ENCODE measurements at regions of chr12 and their contacts with region 1.

Region 1: DNA sequence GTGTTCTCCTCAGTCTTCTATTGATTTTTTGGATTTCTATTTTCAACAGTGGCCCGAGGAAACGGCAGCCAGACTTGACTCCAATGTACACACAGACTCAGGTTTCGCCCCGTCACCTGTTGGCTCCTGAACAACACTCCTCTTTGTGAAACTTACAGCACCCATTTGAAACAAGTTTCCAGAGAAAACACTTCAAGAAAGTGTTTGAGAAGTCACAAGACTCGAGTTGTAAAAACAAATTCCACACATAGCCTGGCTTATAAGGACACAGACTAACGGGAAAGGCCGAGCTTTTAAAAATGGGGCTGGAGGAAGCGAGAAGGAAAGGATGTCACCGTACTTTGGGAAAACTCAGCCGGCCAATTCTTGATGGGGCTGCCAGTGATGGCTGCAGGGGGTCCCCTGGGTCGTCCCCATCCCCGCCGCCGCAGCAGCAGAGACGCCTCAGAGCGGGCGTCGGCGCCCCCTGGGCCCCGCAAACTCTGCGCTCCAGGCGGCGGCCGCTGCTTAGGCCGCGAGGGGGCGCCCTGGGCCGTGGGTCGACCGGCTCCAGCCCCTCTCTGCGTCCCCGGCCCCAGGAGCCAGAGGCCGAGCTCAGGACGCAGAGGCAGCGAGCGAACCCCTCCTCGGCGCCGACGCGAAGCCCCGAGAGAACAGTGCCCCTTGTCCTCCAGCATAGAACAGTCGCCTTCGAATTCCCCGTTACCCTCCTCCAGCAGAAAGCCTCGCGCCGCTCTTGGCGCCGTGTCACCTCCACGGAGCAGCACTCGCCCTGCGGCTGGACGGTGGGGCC is 106.9 kb downstream of the PRICKLE1 start:
- DNase-seq: peak; percentile 28 to 74 (median 67)
- H3K4me3 ChIP-seq: peak overlapping the region in 2 of 4 donors; percentile 47 to 72
- H3K27ac ChIP-seq: peak overlapping the region in 4 of 5 donors; percentile 33 to 89 (median 70)
- H3K4me1 ChIP-seq: peaks cover 8 to 16% of the 10 kb centered on the region in 2 donors
- H3K27me3 ChIP-seq: no peaks in the 10 kb centered on the region
- CTCF ChIP-seq: peak; percentile 51 to 87 (median 74)
- POLR2A ChIP-seq: no peak

Region 2: GRCh38 chr12:42568952-42569915 is 86.6 kb after region 1 on chr12:
- intact Hi-C with region 1: loop called in 1 of 2 experiments (anchors 5 kb)
- DNase-seq: no peak
- H3K4me3 ChIP-seq: no peak overlapping the region
- H3K27ac ChIP-seq: no peak overlapping the region
- H3K4me1 ChIP-seq: peaks cover 0 to 4% of the 10 kb centered on the region in 2 donors
- H3K27me3 ChIP-seq: no peaks in the 10 kb centered on the region
- CTCF ChIP-seq: peak; percentile 25 to 59 (median 46)
- POLR2A ChIP-seq: no peak

Region 3: GRCh38 chr12:43338848-43339526 is 856.3 kb after region 1 on chr12:
- intact Hi-C with region 1: loop called in 1 of 2 experiments (anchors 10 kb)
- DNase-seq: peak in 3 of 7 donors; percentile 8 to 27 (median 12)
- H3K4me3 ChIP-seq: no peak overlapping the region
- H3K27ac ChIP-seq: peak overlapping the region in 1 of 5 donors; percentile 33
- H3K4me1 ChIP-seq: peaks cover 0 to 10% of the 10 kb centered on the region in 2 donors
- H3K27me3 ChIP-seq: no peaks in the 10 kb centered on the region
- CTCF ChIP-seq: peak in 5 of 6 experiments; percentile 40 to 62 (median 47)
- POLR2A ChIP-seq: no peak

Measured in adrenal gland (tissue), 19 donors.